ENCODE measurements at regions of chr19 and their contacts with region 1.

Region 1: GRCh38 chr19:58154679-58155648 is 4.4 kb upstream of the ZNF329 start:
- DNase-seq: peak; percentile 89
- ATAC-seq: peak; percentile 83
- H3K4me3 ChIP-seq: peak overlapping the region; percentile 77
- H3K27ac ChIP-seq: no peak overlapping the region
- H3K4me1 ChIP-seq: no peaks in the 10 kb centered on the region
- H3K27me3 ChIP-seq: no peaks in the 10 kb centered on the region
- CTCF ChIP-seq: peak; percentile 82

Region 2: GRCh38 chr19:58182989-58183816 is 28.2 kb after region 1 on chr19 and contains the start of gene ZNF274:
- CTCF ChIA-PET with region 1: no interaction called
- POLR2A ChIA-PET with region 1: interaction called, 10 read pairs
- intact Hi-C with region 1: no loop called
- DNase-seq: peak; percentile 96
- ATAC-seq: peak; percentile 92
- H3K4me3 ChIP-seq: peak within 1 kb of the TSS; percentile 76
- H3K27ac ChIP-seq: peak within 1 kb of the TSS; percentile 88
- H3K4me1 ChIP-seq: no peaks in the 10 kb centered on the region; the same call in 1 of the 2 replicates
- H3K27me3 ChIP-seq: no peaks in the 10 kb centered on the region
- CTCF ChIP-seq: no peak
- total RNA-seq, gene ZNF274: 15.4 and 16.1 TPM in 2 replicates

Region 3: GRCh38 chr19:58284199-58284598 is 129.2 kb after region 1 on chr19:
- CTCF ChIA-PET with region 1: no interaction called
- POLR2A ChIA-PET with region 1: no interaction called
- intact Hi-C with region 1: no loop called
- DNase-seq: no peak
- ATAC-seq: no peak
- H3K4me3 ChIP-seq: no peak overlapping the region
- H3K27ac ChIP-seq: no peak overlapping the region
- H3K4me1 ChIP-seq: peaks cover 11% of the 10 kb centered on the region
- H3K27me3 ChIP-seq: no peaks in the 10 kb centered on the region
- CTCF ChIP-seq: no peak

Measured in PC-3 (cell line).